WTC11 (cell line): ENCODE measurements at regions of chr1 and their contacts with region 1.

Region 1: DNA sequence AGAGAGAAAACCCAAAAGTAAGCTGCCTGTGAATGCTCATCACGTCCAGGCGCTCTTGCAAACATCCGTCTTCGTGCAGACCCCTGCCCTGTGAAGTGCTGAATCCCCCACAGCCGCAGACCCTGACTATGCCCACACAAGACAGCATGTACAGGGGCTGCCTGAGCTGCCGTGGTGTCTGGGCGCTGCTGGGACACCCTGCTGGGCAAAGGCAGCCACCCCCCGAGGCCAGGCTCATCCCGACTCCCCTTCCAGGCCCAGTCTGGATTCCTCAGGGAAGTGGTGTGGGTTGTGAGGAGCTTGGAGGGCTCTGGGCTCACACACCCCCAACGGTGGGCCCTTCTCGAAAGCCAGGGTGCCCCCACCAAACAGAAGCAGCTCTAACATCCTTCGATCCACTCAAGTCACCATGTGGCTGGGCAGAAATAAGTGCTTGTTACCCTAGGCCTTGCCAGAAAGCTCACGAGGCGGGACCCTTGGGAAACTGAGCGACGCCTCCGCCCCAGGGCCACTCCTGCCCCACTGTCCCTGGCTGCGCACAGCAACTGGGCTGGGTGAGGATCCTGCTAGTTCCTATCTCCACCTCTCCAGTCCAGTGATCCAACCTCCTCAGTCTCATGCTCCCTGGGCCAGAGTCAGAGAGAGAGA is 4.8 kb upstream of the WNT9A start:
- DNase-seq: no peak
- ATAC-seq: no peak
- H3K4me3 Mint-ChIP-seq: no peak overlapping the region
- H3K27ac Mint-ChIP-seq: no peak overlapping the region
- H3K4me1 Mint-ChIP-seq: peaks cover 4% of the 10 kb centered on the region
- H3K27me3 Mint-ChIP-seq: peaks cover 39% of the 10 kb centered on the region
- CTCF ChIP-seq: no peak

Region 2: GRCh38 chr1:227482023-227482299 is 470.5 kb before region 1 on chr1:
- CTCF ChIA-PET with region 1: interaction called, 10 read pairs
- POLR2A ChIA-PET with region 1: no interaction called
- DNase-seq: no peak
- ATAC-seq: no peak
- H3K4me3 Mint-ChIP-seq: no peak overlapping the region
- H3K27ac Mint-ChIP-seq: no peak overlapping the region
- H3K4me1 Mint-ChIP-seq: no peaks in the 10 kb centered on the region
- H3K27me3 Mint-ChIP-seq: peaks cover 36% of the 10 kb centered on the region
- CTCF ChIP-seq: no peak

Region 3: DNA sequence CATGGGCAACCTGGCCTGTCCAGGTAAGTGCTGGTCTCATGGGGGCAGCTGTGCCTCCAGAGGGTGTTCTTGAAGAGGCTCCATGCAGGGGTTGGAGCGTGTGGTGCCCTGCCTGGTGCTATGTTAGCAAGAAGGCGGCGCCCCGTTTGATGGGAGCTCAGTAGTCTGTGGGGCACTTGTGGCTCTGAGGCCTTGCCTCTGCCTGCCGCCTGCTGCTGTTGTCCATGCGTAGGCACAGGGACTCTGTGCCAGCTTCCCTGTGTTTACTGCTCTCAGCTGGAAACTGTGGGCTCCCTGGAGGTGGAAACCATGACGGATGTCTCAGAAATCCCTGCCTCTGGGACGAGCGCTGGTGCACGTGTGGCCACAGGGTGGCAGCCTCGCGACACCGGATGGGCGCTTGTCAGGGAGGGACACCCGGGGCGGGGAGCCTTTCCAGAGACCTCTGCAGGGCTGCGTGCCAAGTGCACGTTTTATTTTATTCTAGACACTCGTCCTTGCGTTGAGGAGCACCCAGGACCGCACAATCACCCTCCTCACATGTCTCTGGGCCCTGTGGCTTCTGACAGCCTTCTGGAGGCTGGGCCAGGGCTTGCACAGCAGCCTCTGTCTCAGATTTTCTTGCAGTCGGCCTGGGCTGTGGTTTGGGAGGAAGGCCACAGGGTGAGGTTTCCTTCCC is 190.1 kb before region 1 on chr1:
- CTCF ChIA-PET with region 1: interaction called, 21 read pairs
- POLR2A ChIA-PET with region 1: no interaction called
- DNase-seq: peak; percentile 91
- ATAC-seq: peak; percentile 90
- H3K4me3 Mint-ChIP-seq: no peak overlapping the region
- H3K27ac Mint-ChIP-seq: no peak overlapping the region
- H3K4me1 Mint-ChIP-seq: no peaks in the 10 kb centered on the region
- H3K27me3 Mint-ChIP-seq: no peaks in the 10 kb centered on the region
- CTCF ChIP-seq: peak; percentile 75

Region 4: DNA sequence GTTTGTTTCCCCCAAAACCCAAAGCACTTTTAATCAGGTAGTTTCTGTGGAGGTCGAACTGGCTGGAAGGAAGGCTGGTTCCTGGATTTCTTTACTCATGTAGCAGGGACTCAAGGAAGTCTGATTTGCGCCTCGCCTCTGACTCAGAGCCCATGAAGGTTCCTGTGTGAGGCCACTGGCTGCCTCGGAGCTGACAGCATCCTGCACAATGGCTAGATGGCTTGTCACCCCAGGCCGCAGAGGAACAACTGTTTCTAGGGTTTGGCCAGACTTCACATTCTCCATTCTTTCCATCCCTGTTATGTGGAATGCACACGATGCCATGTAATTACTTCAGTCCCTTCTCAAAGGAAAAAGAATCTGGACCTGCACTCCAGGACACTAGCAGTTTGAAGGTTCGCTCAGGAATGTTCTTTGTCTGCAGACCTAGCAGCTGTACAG is 176.1 kb before region 1 on chr1:
- CTCF ChIA-PET with region 1: interaction called, 13 read pairs
- POLR2A ChIA-PET with region 1: no interaction called
- DNase-seq: no peak
- ATAC-seq: no peak
- H3K4me3 Mint-ChIP-seq: no peak overlapping the region
- H3K27ac Mint-ChIP-seq: no peak overlapping the region; the same call in 1 of the 2 replicates
- H3K4me1 Mint-ChIP-seq: no peaks in the 10 kb centered on the region
- H3K27me3 Mint-ChIP-seq: no peaks in the 10 kb centered on the region
- CTCF ChIP-seq: no peak

Region 5: DNA sequence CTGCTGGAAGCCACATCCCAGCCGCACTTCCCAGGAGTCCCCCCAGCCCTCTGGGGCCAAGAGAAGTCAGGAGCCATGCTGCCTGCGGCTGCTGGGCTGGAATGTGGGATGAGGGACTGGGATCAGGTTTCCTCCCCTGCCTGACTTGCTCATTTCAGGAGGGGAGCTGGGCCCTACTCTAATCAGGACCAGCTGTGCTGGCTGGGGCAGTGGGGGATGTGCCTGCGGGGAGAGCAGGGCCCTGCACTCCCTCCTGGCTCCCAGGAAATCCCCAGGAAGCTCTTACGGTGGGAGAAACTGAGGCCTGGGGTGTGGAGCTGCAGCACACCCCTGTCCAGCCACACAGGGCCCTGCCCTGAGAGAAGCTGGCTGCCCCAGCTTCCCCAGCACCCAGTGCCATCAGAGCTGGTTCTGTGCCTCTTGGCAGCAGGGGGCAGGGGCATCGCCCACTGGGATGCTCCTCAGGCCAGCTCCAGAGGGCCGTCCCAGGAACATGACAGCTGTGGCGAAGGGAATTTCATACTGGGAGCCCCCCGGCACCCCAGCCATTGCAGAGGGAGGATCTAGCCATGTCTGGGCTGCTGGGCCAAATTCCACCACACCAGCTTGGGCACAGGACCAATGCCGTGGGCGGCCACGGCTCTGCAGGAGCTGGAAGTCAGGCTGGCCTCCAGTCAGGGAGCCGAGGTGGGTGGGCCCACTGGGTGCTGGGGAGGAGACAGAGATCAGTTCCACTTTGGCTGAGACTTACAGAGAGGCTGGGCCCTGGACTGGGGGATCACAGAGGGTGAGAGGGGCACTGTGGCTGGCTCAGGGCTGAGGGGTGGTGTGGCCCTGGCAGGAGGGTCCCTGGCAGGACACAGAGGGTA is 158.3 kb before region 1 on chr1:
- CTCF ChIA-PET with region 1: interaction called, 42 read pairs
- POLR2A ChIA-PET with region 1: interaction called, 3 read pairs
- DNase-seq: peak; percentile 73
- ATAC-seq: peak; percentile 86
- H3K4me3 Mint-ChIP-seq: no peak overlapping the region
- H3K27ac Mint-ChIP-seq: peak overlapping the region; percentile 63; the same call in 1 of the 2 replicates
- H3K4me1 Mint-ChIP-seq: peaks cover 19% of the 10 kb centered on the region
- H3K27me3 Mint-ChIP-seq: peaks cover 15% of the 10 kb centered on the region
- CTCF ChIP-seq: no peak

Region 6: DNA sequence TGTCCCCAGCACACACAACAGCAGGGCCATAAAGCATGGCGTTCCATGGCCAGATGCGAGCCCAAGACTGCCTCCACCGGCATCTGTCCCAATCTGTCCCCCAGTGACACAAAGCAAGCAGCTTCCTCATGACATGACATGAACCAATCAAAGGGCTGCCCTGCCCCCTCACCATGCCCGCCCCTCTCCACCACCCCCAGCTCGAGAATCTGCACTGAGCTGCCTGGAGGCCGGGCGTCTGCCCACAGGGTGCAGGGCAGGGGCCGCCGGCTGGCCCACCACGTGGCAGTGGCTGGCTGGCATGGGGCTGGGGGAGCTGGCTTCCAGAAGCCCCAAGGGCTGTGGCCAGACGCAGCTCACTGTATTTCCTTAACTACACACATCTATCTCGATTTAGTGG is 32.6 kb before region 1 on chr1:
- CTCF ChIA-PET with region 1: interaction called, 10 read pairs
- POLR2A ChIA-PET with region 1: no interaction called
- DNase-seq: peak; percentile 52
- ATAC-seq: peak; percentile 74
- H3K4me3 Mint-ChIP-seq: no peak overlapping the region
- H3K27ac Mint-ChIP-seq: peak overlapping the region; percentile 73
- H3K4me1 Mint-ChIP-seq: peaks cover 12% of the 10 kb centered on the region
- H3K27me3 Mint-ChIP-seq: no peaks in the 10 kb centered on the region
- CTCF ChIP-seq: no peak

Region 7: GRCh38 chr1:228066891-228067654 is 114.6 kb after region 1 on chr1:
- CTCF ChIA-PET with region 1: no interaction called
- POLR2A ChIA-PET with region 1: no interaction called
- DNase-seq: no peak
- ATAC-seq: no peak
- H3K4me3 Mint-ChIP-seq: no peak overlapping the region
- H3K27ac Mint-ChIP-seq: no peak overlapping the region
- H3K4me1 Mint-ChIP-seq: no peaks in the 10 kb centered on the region
- H3K27me3 Mint-ChIP-seq: peaks cover 85% of the 10 kb centered on the region
- CTCF ChIP-seq: no peak